Activated B cell treated with CpG ODN at 0.5 μM for 24 hours (primary cell): ENCODE measurements at regions of chr18 and their contacts with region 1.

Region 1: DNA sequence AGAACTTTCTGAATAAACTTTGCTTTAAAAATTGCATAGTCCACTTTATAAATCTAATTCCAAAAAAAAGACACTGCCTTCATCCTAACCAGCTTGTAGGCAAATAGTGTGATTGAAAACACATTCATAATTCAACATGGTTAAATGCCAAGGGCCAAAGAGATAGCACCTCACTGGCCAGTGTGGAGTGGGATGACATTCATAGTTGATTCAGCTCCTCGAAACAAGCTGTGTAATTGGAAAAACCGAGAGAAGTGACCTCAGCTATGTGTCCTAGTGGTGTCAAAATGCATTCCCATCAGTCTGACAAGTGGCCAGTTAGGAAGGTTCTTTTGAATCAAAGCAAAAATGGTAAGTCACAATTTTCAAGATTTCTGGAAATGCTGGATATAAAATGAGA is 1068.5 kb upstream of the CELF4 start:
- DNase-seq: no peak
- ATAC-seq: no peak
- H3K4me3 Mint-ChIP-seq: no peak overlapping the region
- H3K27ac Mint-ChIP-seq: no peak overlapping the region
- H3K4me1 Mint-ChIP-seq: no peaks in the 10 kb centered on the region
- H3K27me3 Mint-ChIP-seq: no peaks in the 10 kb centered on the region
- CTCF ChIP-seq: no peak

Region 2: DNA sequence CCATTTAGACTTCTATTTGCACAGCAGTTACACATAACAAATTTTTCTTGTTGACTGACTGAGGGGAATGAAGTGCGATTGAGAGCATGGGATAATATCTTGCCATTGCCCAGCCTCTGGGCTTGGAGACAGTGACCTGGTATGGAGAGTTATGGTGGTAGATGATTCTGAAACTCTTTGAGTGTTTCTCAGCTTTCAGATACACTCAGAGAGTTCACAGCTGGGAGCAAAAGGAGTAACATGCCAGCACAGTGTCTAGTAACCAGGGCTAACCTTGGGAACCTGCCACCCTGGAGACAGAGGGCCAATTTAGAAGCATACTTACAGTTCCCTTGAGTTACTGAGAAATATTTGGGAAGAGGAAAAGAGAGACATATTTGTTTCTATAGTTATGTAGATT is 30.8 kb after region 1 on chr18:
- CTCF ChIA-PET with region 1: no interaction called
- POLR2A ChIA-PET with region 1: no interaction called
- intact Hi-C with region 1: no loop called
- DNase-seq: no peak
- ATAC-seq: no peak
- H3K4me3 Mint-ChIP-seq: no peak overlapping the region
- H3K27ac Mint-ChIP-seq: no peak overlapping the region
- H3K4me1 Mint-ChIP-seq: no peaks in the 10 kb centered on the region
- H3K27me3 Mint-ChIP-seq: no peaks in the 10 kb centered on the region
- CTCF ChIP-seq: no peak

Region 3: DNA sequence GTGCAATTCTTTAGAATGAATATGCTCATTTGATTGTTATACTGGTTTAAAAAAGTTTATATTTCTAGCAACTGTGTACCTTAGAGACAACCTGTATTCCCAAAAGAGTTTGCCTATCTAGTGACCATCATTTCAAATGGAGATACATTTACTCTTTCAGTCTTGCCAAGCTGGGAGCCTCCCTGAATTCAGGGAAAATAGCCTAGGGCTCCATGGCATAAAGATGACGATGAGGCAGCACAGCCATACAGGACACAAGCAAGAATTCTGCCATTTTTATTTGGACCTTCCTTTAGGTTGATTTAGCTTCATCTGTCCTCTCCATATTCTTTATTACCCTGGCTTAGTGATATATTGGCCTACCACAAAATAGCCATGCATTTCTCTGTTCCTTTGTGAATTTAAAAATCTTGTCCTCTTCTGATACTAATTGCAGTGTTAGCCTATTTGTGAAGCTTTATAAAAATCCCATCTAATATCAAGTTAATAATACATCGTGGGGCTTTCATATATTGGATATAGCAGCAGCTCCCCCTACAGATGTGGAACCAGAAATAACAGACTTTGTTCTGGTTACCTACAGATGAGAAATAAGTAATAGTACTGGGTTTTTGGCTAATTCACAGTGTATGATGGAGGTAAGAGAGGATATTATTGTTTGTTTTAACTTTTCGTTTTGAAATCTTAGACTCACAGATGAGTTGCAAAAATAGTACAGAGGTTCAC is 1659.0 kb after region 1 on chr18:
- CTCF ChIA-PET with region 1: no interaction called
- POLR2A ChIA-PET with region 1: no interaction called
- intact Hi-C with region 1: loop called (anchors 5 kb)
- DNase-seq: no peak
- ATAC-seq: no peak
- H3K4me3 Mint-ChIP-seq: no peak overlapping the region
- H3K27ac Mint-ChIP-seq: no peak overlapping the region
- H3K4me1 Mint-ChIP-seq: no peaks in the 10 kb centered on the region
- H3K27me3 Mint-ChIP-seq: no peaks in the 10 kb centered on the region
- CTCF ChIP-seq: no peak